ENCODE measurements at regions of chr11 and their contacts with region 1.

Region 1: GRCh38 chr11:58127342-58127741 is 2.0 kb upstream of the OR9I1 start:
- DNase-seq: no peak
- ATAC-seq: no peak
- H3K4me3 ChIP-seq: no peak overlapping the region
- H3K27ac ChIP-seq: no peak overlapping the region
- H3K4me1 ChIP-seq: no peaks in the 10 kb centered on the region
- H3K27me3 ChIP-seq: 0 out of 2 replicates have a peak, but pooled peaks cover 11% of the 10 kb centered on the region
- CTCF ChIP-seq: no peak
- POLR2A ChIP-seq: no peak
- RAD21 ChIP-seq: no peak

Region 2: DNA sequence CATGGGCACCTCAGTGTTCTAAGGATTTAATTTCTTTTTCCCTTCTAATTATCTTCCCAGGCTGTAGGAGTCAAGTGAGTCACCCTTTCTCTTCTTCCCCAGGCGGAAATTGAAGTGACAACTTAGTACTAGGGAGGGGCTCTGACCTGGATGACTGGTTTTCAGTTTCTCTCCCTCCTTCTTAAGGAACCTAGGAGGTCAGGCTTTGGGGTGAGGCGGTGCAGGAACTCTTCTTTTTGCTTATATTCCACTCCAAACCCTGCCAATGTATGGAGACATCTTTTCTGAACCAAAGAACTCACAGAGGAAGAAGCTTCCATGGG is 446.8 kb before region 1 on chr11:
- CTCF ChIA-PET with region 1: no interaction called
- POLR2A ChIA-PET with region 1: no interaction called
- RAD21 ChIA-PET with region 1: no interaction called
- intact Hi-C with region 1: no loop called
- DNase-seq: no peak
- ATAC-seq: no peak
- H3K4me3 ChIP-seq: no peak overlapping the region
- H3K27ac ChIP-seq: no peak overlapping the region
- H3K4me1 ChIP-seq: peaks cover 0 to 6% of the 10 kb centered on the region in 2 experiments; a peak in 1 of 4 replicates
- H3K27me3 ChIP-seq: no peaks in the 10 kb centered on the region
- CTCF ChIP-seq: no peak
- POLR2A ChIP-seq: no peak
- RAD21 ChIP-seq: no peak

Region 3: DNA sequence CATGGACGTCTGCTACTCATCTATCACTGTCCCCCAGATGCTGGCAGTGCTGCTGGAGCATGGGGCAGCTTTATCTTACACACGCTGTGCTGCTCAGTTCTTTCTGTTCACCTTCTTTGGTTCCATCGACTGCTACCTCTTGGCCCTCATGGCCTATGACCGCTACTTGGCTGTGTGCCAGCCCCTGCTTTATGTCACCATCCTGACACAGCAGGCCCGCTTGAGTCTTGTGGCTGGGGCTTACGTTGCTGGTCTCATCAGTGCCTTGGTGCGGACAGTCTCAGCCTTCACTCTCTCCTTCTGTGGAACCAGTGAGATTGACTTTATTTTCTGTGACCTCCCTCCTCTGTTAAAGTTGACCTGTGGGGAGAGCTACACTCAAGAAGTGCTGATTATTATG is 52.3 kb after region 1 on chr11:
- CTCF ChIA-PET with region 1: no interaction called
- POLR2A ChIA-PET with region 1: no interaction called
- RAD21 ChIA-PET with region 1: no interaction called
- intact Hi-C with region 1: loop called (anchors 10 kb)
- DNase-seq: no peak
- ATAC-seq: no peak
- H3K4me3 ChIP-seq: no peak overlapping the region
- H3K27ac ChIP-seq: no peak overlapping the region
- H3K4me1 ChIP-seq: no peaks in the 10 kb centered on the region
- H3K27me3 ChIP-seq: peaks cover 25% of the 10 kb centered on the region
- CTCF ChIP-seq: no peak
- POLR2A ChIP-seq: no peak
- RAD21 ChIP-seq: no peak

Region 4: GRCh38 chr11:58406774-58407173 is 279.4 kb after region 1 on chr11 and contains the start of gene OR5B3:
- CTCF ChIA-PET with region 1: no interaction called
- POLR2A ChIA-PET with region 1: no interaction called
- RAD21 ChIA-PET with region 1: no interaction called
- intact Hi-C with region 1: no loop called
- DNase-seq: no peak
- ATAC-seq: no peak
- H3K4me3 ChIP-seq: no peak within 1 kb of the TSS
- H3K27ac ChIP-seq: no peak within 1 kb of the TSS
- H3K4me1 ChIP-seq: no peaks in the 10 kb centered on the region
- H3K27me3 ChIP-seq: no peaks in the 10 kb centered on the region
- CTCF ChIP-seq: no peak
- POLR2A ChIP-seq: no peak
- RAD21 ChIP-seq: no peak
- total RNA-seq, gene OR5B3: not detected

Region 5: GRCh38 chr11:59164028-59164427 is 1036.7 kb after region 1 on chr11:
- CTCF ChIA-PET with region 1: no interaction called
- POLR2A ChIA-PET with region 1: no interaction called
- RAD21 ChIA-PET with region 1: no interaction called
- intact Hi-C with region 1: no loop called
- DNase-seq: no peak
- ATAC-seq: no peak
- H3K4me3 ChIP-seq: no peak overlapping the region
- H3K27ac ChIP-seq: no peak overlapping the region
- H3K4me1 ChIP-seq: no peaks in the 10 kb centered on the region
- H3K27me3 ChIP-seq: no peaks in the 10 kb centered on the region
- CTCF ChIP-seq: no peak
- POLR2A ChIP-seq: no peak
- RAD21 ChIP-seq: no peak